Activated T-helper 1 cell treated with anti-CD3 and anti-CD28 coated beads, Interleukin-12 subunit alpha, Interleukin-12 subunit beta, Interleukin-2, Interleukin-4 antibody, amounts not matched to agents 30 ng/mL and 10 ng/mL and 1 ng/mL, durations not matched to agents 14 hours and 24 hours and 36 hours (primary cell): ENCODE measurements at regions of chr16 and their contacts with region 1.

Region 1: DNA sequence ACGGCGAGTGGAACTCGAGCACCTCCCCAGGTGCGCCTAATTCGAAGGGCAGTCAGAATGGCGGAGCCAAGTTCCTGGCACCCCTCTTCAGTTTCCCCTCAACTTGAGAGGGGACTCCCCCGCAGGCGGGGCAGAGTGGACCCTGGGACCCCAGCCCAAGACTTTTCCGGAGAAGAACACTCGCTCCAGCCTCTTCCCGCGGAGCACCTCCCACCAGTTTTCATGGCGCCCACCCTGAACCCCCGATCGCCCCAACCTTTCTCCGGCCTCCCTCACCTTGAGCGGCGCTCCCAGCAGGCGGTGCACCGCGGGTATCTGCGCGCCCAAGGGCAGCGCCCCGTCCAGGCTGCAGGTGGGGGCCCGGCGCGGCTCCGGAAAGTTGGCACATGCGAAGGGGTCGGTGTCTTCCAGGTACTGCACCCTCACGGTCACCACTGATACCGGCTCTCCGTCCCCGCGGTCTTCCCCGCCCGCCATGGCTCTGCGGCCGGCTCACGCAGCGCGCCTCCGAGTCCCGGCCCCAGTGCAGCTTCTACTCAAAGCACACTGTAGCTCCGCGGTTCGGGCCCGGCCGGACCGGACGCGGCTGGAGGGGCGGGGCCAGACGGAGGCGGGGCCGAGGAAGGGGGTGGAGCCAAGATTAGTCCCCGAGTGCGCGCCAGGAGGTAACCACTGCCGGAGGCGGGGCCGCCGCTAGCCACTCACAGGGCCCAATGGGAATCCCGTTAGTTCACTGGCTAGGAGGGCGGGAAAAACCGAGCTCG is at the start of gene FHOD1:
- DNase-seq: peak; percentile 98
- H3K4me3 Mint-ChIP-seq: peak within 1 kb of the TSS; percentile 85
- H3K27ac Mint-ChIP-seq: peak within 1 kb of the TSS; percentile 87
- H3K4me1 Mint-ChIP-seq: peaks cover 55% of the 10 kb centered on the region
- H3K27me3 Mint-ChIP-seq: peaks cover 6% of the 10 kb centered on the region
- total RNA-seq, gene FHOD1: 116 and 119 TPM in 2 replicates

Region 2: DNA sequence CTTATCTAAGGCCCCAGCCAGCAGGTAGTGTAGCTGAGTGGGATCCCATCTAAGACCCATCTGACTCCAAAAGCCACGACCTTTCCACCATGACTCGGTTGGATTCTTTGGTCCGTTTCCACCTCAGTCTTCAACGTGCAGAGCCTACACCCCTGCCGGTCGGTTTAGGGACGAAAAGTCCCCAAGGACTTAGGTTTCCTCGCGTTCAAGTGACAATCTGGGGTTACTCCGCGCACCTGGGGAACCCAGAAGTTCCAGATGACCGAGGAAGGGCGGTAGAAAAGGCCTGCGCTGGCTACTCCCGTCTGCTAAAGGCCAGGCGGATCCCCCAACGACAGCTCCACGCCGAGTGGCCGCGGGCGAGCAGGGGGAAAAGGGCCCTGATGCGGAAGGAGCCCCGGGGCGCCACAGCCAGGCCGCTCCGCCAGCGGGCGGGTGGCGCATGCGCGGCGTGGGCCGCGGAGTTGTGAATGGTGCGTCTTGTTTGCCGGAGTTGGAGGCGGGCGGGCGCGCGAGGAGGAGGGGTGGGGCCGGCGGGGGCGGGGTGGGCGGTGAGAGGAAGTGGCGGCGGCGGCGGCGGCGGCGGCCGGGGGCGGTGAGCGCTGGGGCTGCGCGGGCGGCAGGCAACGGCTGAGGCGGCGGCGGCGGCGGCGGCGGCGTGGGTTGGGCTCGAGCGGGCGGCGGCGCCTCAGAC is 218.4 kb before region 1 on chr16 and contains the start of gene CBFB:
- intact Hi-C with region 1: loop called (anchors 5 kb)
- DNase-seq: peak; percentile 94
- H3K4me3 Mint-ChIP-seq: peak within 1 kb of the TSS; percentile 93
- H3K27ac Mint-ChIP-seq: peak within 1 kb of the TSS; percentile 94
- H3K4me1 Mint-ChIP-seq: peaks cover 61% of the 10 kb centered on the region
- H3K27me3 Mint-ChIP-seq: no peaks in the 10 kb centered on the region
- total RNA-seq, gene CBFB: 171 and 175 TPM in 2 replicates

Region 3: DNA sequence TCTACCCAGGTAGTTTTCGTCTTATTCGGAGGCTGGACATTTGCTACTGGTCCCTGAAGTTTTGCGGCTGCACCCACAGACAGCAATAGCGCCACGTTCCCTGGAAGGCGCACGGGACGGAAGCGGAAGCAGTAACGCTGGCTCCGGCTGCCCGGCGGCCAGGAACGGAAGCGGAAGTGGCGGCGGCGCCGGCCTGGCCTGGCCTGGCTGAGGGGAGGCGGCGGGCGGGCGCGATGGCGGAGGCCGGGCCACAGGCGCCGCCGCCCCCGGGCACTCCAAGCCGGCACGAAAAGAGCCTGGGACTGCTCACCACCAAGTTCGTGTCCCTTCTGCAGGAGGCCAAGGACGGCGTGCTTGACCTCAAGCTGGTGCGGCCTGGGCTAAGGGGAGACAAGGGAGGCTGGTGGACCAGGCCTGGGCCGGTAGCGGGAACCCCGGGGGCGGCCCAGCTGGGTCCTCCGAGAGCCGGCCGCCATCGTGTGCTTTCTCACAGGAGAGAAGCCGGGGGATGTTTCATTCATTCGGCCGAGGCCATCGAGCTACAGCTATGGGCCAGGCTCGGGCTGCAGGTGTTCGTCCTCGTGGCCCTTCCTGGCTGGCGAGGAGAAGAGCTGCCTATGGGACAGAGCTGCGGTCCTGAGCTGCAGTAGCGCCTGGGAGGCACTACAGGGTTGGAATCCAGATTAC is 55.0 kb before region 1 on chr16 and contains the start of gene E2F4:
- intact Hi-C with region 1: loop called (anchors 1 kb)
- DNase-seq: peak; percentile 86
- H3K4me3 Mint-ChIP-seq: peak within 1 kb of the TSS; percentile 95
- H3K27ac Mint-ChIP-seq: peak within 1 kb of the TSS; percentile 86
- H3K4me1 Mint-ChIP-seq: peaks cover 51% of the 10 kb centered on the region
- H3K27me3 Mint-ChIP-seq: no peaks in the 10 kb centered on the region
- total RNA-seq, gene E2F4: 174 and 181 TPM in 2 replicates

Region 4: DNA sequence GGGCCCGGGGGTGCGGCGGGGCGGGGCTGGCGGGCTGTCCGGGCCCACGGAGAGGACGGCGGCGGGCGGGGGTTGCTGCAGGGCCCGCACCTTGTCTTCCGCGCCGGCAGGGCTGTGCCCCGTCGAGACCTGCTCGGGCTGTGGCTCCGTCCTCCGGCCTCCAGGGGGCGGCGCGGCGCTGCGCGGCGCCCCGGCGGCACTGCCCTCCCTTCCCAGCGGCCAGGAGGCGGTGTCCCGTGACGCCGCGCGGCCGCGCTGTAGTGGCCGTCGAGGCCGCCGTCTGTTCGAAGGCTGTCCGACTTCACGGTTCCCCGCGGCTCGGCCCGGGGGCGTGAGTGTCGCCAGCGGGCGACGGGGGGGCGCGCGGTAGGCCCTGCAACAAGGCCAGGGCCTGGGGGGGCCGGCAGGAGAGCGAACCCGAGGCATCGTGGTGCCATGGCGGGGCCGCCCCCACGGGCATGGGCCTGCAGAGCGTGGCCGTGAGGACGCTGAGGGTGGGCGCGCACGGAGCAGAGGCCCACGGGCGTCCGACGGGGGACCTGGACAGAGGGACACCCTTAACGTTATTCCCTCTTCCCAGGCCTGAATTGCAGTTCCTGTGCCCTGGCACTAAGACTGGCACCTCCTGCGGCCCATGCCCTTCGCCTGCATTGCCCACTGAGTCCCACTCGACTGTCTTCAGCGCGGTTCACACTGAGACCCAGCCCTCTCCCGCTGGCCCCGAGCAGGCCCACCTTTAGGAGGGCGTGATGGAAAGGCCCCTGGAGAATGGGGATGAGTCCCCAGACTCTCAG is 32.4 kb after region 1 on chr16 and contains the start of gene PLEKHG4:
- intact Hi-C with region 1: loop called (anchors 1 kb)
- DNase-seq: peak; percentile 80
- H3K4me3 Mint-ChIP-seq: peak within 1 kb of the TSS; percentile 88
- H3K27ac Mint-ChIP-seq: peak within 1 kb of the TSS; percentile 86
- H3K4me1 Mint-ChIP-seq: peaks cover 30% of the 10 kb centered on the region
- H3K27me3 Mint-ChIP-seq: no peaks in the 10 kb centered on the region
- total RNA-seq, gene PLEKHG4: 39.6 and 42.3 TPM in 2 replicates

Region 5: GRCh38 chr16:67561824-67562525 is 314.9 kb after region 1 on chr16:
- intact Hi-C with region 1: loop called (anchors 5 kb)
- DNase-seq: peak; percentile 98
- H3K4me3 Mint-ChIP-seq: peak overlapping the region; percentile 88
- H3K27ac Mint-ChIP-seq: peak overlapping the region; percentile 94
- H3K4me1 Mint-ChIP-seq: peaks cover 40% of the 10 kb centered on the region
- H3K27me3 Mint-ChIP-seq: no peaks in the 10 kb centered on the region

Region 6: DNA sequence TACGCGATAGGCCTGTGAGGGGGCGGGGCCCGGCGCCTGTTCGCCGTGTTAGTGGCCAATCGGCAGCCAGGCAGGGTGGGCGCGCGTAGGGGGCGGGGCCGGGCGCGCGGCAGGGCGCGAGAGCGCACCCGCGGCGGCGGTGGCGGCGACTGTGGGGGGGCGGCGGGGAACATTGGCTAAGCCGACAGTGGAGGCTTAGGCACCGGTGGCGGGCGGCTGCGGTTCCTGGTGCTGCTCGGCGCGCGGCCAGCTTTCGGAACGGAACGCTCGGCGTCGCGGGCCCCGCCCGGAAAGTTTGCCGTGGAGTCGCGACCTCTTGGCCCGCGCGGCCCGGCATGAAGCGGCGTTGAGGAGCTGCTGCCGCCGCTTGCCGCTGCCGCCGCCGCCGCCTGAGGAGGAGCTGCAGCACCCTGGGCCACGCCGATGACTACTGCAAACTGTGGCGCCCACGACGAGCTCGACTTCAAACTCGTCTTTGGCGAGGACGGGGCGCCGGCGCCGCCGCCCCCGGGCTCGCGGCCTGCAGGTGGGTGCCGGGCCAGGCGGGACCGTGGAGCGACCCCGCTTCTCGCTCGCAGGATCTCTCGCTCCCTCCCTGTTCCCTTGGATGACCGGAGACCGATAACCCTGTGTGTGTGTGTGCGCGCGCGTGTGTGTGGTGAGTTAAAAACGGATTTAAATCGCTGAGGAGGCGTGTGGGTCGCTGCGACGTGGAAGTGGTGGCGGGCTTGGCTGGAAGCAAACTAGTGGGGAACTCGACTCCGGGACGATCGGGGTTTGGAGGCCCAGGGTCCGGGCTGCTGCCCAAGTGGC is 838.3 kb after region 1 on chr16 and contains the start of gene NFATC3:
- intact Hi-C with region 1: loop called (anchors 10 kb)
- DNase-seq: peak; percentile 97
- H3K4me3 Mint-ChIP-seq: peak within 1 kb of the TSS; percentile 95
- H3K27ac Mint-ChIP-seq: peak within 1 kb of the TSS; percentile 96
- H3K4me1 Mint-ChIP-seq: peaks cover 73% of the 10 kb centered on the region
- H3K27me3 Mint-ChIP-seq: no peaks in the 10 kb centered on the region
- total RNA-seq, gene NFATC3: 152 and 157 TPM in 2 replicates

Region 7: GRCh38 chr16:69089091-69089910 is 1842.2 kb after region 1 on chr16:
- intact Hi-C with region 1: no loop called
- DNase-seq: no peak
- H3K4me3 Mint-ChIP-seq: no peak overlapping the region
- H3K27ac Mint-ChIP-seq: no peak overlapping the region
- H3K4me1 Mint-ChIP-seq: peaks cover 6% of the 10 kb centered on the region
- H3K27me3 Mint-ChIP-seq: no peaks in the 10 kb centered on the region